B cell (primary cell): ENCODE measurements at regions of chrX and their contacts with region 1.

Region 1: GRCh38 chrX:19739683-19740082 is 147.7 kb downstream of the SH3KBP1 start:
- DNase-seq: peak; percentile 65
- ATAC-seq: peak; percentile 49
- H3K4me3 ChIP-seq: no peak overlapping the region
- H3K4me3 Mint-ChIP-seq: no peak overlapping the region
- H3K27ac ChIP-seq: no peak overlapping the region
- H3K27ac Mint-ChIP-seq: peak overlapping the region; percentile 73
- H3K4me1 ChIP-seq: peaks cover 12 to 17% of the 10 kb centered on the region in 2 donors
- H3K4me1 Mint-ChIP-seq: peaks cover 45% of the 10 kb centered on the region
- H3K27me3 ChIP-seq: no peaks in the 10 kb centered on the region
- H3K27me3 Mint-ChIP-seq: no peaks in the 10 kb centered on the region
- CTCF ChIP-seq: peak; percentile 74

Region 2: GRCh38 chrX:19593690-19594089 is 146.0 kb before region 1 on chrX:
- CTCF ChIA-PET with region 1: interaction called, 4 read pairs
- POLR2A ChIA-PET with region 1: no interaction called
- intact Hi-C with region 1: loop called (anchors 1 kb)
- DNase-seq: peak; percentile 59
- ATAC-seq: no peak
- H3K4me3 ChIP-seq: no peak overlapping the region
- H3K4me3 Mint-ChIP-seq: no peak overlapping the region
- H3K27ac ChIP-seq: no peak overlapping the region
- H3K27ac Mint-ChIP-seq: no peak overlapping the region
- H3K4me1 ChIP-seq: no peaks in the 10 kb centered on the region
- H3K4me1 Mint-ChIP-seq: no peaks in the 10 kb centered on the region
- H3K27me3 ChIP-seq: no peaks in the 10 kb centered on the region
- H3K27me3 Mint-ChIP-seq: no peaks in the 10 kb centered on the region
- CTCF ChIP-seq: peak; percentile 63

Region 3: DNA sequence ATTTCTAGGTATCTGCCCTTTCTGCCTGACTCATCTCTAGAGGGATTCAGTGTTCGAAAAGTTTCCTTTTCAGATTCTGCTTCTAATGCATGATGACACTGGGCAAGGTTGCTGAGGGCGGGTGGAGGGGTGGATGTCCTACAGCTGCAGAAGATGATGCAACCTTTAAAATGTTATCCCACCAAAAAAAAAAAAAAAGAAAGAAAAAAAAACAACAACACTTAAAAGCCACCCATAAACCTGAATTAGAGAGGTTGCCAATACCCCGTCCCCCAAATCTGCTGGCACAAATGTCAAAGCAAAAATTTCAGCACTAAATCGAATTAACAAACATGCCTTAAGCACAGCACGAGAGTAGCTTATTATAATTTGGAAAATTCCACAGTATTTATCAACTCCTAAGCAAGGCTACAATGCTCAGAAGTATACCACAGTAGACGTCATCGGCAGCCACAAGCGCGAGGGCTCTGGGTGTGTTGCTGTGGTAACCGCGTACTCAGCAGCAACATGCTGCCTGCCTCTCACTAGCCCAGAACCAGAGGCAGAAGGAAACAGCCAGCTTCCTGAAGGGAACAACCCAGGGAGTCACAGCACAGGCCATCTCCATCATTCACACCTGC is 56.9 kb before region 1 on chrX:
- CTCF ChIA-PET with region 1: no interaction called
- POLR2A ChIA-PET with region 1: no interaction called
- intact Hi-C with region 1: loop called (anchors 10 kb)
- DNase-seq: peak; percentile 74
- ATAC-seq: peak; percentile 85
- H3K4me3 ChIP-seq: no peak overlapping the region
- H3K4me3 Mint-ChIP-seq: peak overlapping the region; percentile 62
- H3K27ac ChIP-seq: peak overlapping the region in 1 of 2 donors; percentile 62
- H3K27ac Mint-ChIP-seq: peak overlapping the region; percentile 92
- H3K4me1 ChIP-seq: peaks cover 27 to 40% of the 10 kb centered on the region in 2 donors
- H3K4me1 Mint-ChIP-seq: peaks cover 71% of the 10 kb centered on the region
- H3K27me3 ChIP-seq: no peaks in the 10 kb centered on the region
- H3K27me3 Mint-ChIP-seq: no peaks in the 10 kb centered on the region
- CTCF ChIP-seq: no peak

Region 4: GRCh38 chrX:19772826-19773628 is 33.3 kb after region 1 on chrX:
- CTCF ChIA-PET with region 1: interaction called, 4 read pairs
- POLR2A ChIA-PET with region 1: no interaction called
- intact Hi-C with region 1: loop called (anchors 5 kb)
- DNase-seq: peak; percentile 38
- ATAC-seq: peak; percentile 57
- H3K4me3 ChIP-seq: no peak overlapping the region
- H3K4me3 Mint-ChIP-seq: peak overlapping the region; percentile 67
- H3K27ac ChIP-seq: peak overlapping the region; percentile 38 to 57
- H3K27ac Mint-ChIP-seq: peak overlapping the region; percentile 90
- H3K4me1 ChIP-seq: peaks cover 26 to 43% of the 10 kb centered on the region in 2 donors
- H3K4me1 Mint-ChIP-seq: peaks cover 58% of the 10 kb centered on the region
- H3K27me3 ChIP-seq: no peaks in the 10 kb centered on the region
- H3K27me3 Mint-ChIP-seq: no peaks in the 10 kb centered on the region
- CTCF ChIP-seq: no peak

Region 5: GRCh38 chrX:19846995-19847790 is 107.5 kb after region 1 on chrX:
- CTCF ChIA-PET with region 1: interaction called, 10 read pairs
- POLR2A ChIA-PET with region 1: no interaction called
- intact Hi-C with region 1: loop called (anchors 5 kb)
- DNase-seq: no peak
- ATAC-seq: no peak
- H3K4me3 ChIP-seq: no peak overlapping the region
- H3K4me3 Mint-ChIP-seq: peak overlapping the region; percentile 67
- H3K27ac ChIP-seq: peak overlapping the region in 1 of 2 donors; percentile 61
- H3K27ac Mint-ChIP-seq: peak overlapping the region; percentile 85
- H3K4me1 ChIP-seq: peaks cover 28 to 48% of the 10 kb centered on the region in 2 donors
- H3K4me1 Mint-ChIP-seq: peaks cover 62% of the 10 kb centered on the region
- H3K27me3 ChIP-seq: no peaks in the 10 kb centered on the region
- H3K27me3 Mint-ChIP-seq: no peaks in the 10 kb centered on the region
- CTCF ChIP-seq: no peak

Region 6: GRCh38 chrX:20066968-20067708 is 327.5 kb after region 1 on chrX:
- CTCF ChIA-PET with region 1: no interaction called
- POLR2A ChIA-PET with region 1: interaction called, 6 read pairs
- intact Hi-C with region 1: loop called (anchors 5 kb)
- DNase-seq: peak; percentile 60
- ATAC-seq: peak; percentile 65
- H3K4me3 ChIP-seq: no peak overlapping the region
- H3K4me3 Mint-ChIP-seq: no peak overlapping the region
- H3K27ac ChIP-seq: no peak overlapping the region
- H3K27ac Mint-ChIP-seq: no peak overlapping the region
- H3K4me1 ChIP-seq: peaks cover 2% of the 10 kb centered on the region in 2 donors
- H3K4me1 Mint-ChIP-seq: peaks cover 7% of the 10 kb centered on the region
- H3K27me3 ChIP-seq: no peaks in the 10 kb centered on the region
- H3K27me3 Mint-ChIP-seq: no peaks in the 10 kb centered on the region
- CTCF ChIP-seq: peak; percentile 65